ENCODE measurements at regions of chr6 and their contacts with region 1.

Region 1: DNA sequence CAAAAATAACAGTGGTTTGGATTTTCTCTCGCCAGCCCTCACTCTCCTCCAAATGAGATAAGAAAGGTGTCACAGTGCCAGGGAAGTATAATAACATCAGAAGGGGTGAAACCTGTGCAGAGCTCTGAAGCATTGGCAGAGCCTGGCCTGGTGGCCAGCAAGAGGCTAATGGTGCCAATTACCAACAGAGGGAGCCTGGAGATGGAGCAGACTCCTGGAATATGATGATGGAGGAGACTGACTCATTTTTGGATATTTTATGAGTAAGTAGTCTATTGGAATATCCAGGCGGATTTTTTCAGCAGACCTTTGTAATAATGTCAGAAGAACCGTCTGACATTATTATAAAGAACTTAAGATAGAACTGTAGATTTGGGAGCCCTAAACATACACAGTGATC is 442.6 kb upstream of the MARCKS start:
- DNase-seq: peak; percentile 56
- H3K4me3 Mint-ChIP-seq: no peak overlapping the region
- H3K27ac Mint-ChIP-seq: peak overlapping the region; percentile 1
- H3K4me1 Mint-ChIP-seq: peaks cover 34% of the 10 kb centered on the region
- H3K27me3 Mint-ChIP-seq: no peaks in the 10 kb centered on the region
- CTCF ChIP-seq: peak; percentile 49

Region 2: DNA sequence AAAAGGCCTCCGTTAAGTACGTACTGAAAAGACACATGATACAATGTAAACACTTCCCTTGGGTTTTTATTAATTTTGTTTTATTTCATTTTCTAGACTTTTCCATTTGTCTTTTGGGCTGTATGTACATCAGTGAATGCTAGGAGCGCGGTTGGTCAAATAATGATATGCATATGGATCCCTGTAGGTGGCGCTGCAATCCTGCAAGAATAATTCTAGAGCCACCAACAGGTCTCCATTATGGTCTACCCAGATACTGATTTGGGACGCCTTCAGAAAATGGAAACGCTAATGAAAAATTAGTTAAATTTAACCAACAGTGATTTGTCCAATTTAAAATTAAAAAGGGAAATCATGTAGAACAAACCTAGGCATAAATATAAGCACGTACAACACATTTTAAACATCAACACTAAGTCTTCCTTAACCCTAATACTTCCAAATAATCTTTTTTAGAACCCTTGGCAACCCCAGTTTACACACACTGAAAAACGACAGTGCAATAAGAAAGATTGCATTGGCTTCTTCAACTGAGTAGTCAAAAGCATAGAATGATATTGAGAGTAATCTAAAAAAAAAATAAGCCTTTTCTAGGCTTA is 633.9 kb before region 1 on chr6:
- CTCF ChIA-PET with region 1: no interaction called
- intact Hi-C with region 1: loop called (anchors 5 kb)
- DNase-seq: peak; percentile 76
- H3K4me3 Mint-ChIP-seq: no peak overlapping the region
- H3K27ac Mint-ChIP-seq: no peak overlapping the region
- H3K4me1 Mint-ChIP-seq: no peaks in the 10 kb centered on the region
- H3K27me3 Mint-ChIP-seq: no peaks in the 10 kb centered on the region
- CTCF ChIP-seq: peak; percentile 73

Region 3: DNA sequence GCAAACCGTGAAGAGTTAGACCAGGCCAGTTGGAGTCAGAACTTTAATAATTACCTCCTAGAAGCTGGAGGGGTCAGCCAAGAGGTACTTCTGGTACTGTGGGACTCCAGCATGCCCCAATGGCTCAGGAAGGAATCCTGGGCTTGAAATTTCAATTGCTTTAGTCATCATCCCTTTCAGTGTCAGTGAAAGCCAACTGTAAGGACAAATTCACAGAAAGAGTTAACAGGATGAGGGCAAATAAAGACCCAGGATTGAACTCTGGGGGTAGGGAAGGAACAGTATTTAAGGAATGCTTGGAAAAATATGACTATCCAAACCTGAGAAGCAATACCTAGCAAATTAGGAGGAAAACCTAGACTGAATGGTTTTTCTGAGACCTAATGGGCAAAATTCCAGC is 292.5 kb before region 1 on chr6:
- CTCF ChIA-PET with region 1: no interaction called
- intact Hi-C with region 1: loop called (anchors 2 kb)
- DNase-seq: peak; percentile 44
- H3K4me3 Mint-ChIP-seq: no peak overlapping the region
- H3K27ac Mint-ChIP-seq: peak overlapping the region; percentile 10
- H3K4me1 Mint-ChIP-seq: peaks cover 30% of the 10 kb centered on the region
- H3K27me3 Mint-ChIP-seq: no peaks in the 10 kb centered on the region
- CTCF ChIP-seq: no peak

Region 4: GRCh38 chr6:113359155-113360140 is 55.1 kb before region 1 on chr6:
- CTCF ChIA-PET with region 1: no interaction called
- intact Hi-C with region 1: loop called (anchors 5 kb)
- DNase-seq: peak; percentile 40
- H3K4me3 Mint-ChIP-seq: no peak overlapping the region
- H3K27ac Mint-ChIP-seq: peak overlapping the region; percentile 69
- H3K4me1 Mint-ChIP-seq: peaks cover 65% of the 10 kb centered on the region
- H3K27me3 Mint-ChIP-seq: no peaks in the 10 kb centered on the region
- CTCF ChIP-seq: no peak

Region 5: GRCh38 chr6:113632220-113632864 is 217.8 kb after region 1 on chr6:
- CTCF ChIA-PET with region 1: no interaction called
- intact Hi-C with region 1: loop called (anchors 5 kb)
- DNase-seq: peak; percentile 61
- H3K4me3 Mint-ChIP-seq: peak overlapping the region; percentile 55
- H3K27ac Mint-ChIP-seq: peak overlapping the region; percentile 97
- H3K4me1 Mint-ChIP-seq: peaks cover 57% of the 10 kb centered on the region
- H3K27me3 Mint-ChIP-seq: no peaks in the 10 kb centered on the region
- CTCF ChIP-seq: no peak

Region 6: DNA sequence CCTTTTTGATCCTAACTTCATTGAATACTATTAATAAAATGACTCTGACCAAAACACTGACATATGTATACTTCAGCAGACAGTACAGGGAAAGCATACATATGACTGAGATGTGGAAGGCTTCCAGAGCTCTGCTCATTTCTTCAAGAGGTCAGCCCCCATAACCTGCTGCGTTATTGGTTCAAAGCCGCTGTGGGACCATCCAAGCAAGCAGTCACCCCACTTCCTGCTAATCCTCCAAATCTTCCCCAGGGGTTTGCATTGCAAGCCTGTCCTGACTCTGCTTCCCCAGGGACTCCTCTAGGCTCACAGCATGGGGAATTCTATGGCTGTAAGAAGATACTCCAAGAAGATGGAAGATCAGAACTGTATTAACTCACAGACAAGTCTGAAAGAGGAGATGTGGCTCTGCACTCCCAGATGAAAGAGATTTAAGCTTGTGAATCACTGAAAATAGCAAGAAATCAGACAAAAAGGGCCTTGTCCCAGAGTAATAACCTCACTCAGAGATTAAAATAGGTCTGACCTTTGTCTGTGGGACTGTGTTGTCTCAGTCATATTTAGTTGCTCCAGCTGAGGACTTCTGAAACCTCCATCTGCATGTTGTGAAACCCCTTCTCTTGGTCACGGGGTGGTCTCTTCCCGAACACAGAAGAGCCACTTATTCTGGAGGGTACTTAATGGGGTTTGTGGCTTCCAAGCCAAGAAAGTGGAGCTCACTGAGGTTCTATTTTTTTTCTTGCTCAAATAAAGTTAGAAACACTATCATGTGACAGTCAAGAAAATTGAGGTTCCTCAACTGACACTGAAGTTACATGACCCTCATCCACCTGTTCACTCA is 341.2 kb after region 1 on chr6:
- CTCF ChIA-PET with region 1: no interaction called
- intact Hi-C with region 1: no loop called
- DNase-seq: no peak
- H3K4me3 Mint-ChIP-seq: no peak overlapping the region
- H3K27ac Mint-ChIP-seq: no peak overlapping the region
- H3K4me1 Mint-ChIP-seq: peaks cover 9% of the 10 kb centered on the region
- H3K27me3 Mint-ChIP-seq: no peaks in the 10 kb centered on the region
- CTCF ChIP-seq: no peak

Region 7: GRCh38 chr6:113879186-113880096 is 464.9 kb after region 1 on chr6:
- CTCF ChIA-PET with region 1: interaction called, 4 read pairs
- intact Hi-C with region 1: loop called (anchors 5 kb)
- DNase-seq: peak; percentile 54
- H3K4me3 Mint-ChIP-seq: no peak overlapping the region
- H3K27ac Mint-ChIP-seq: no peak overlapping the region
- H3K4me1 Mint-ChIP-seq: peaks cover 16% of the 10 kb centered on the region
- H3K27me3 Mint-ChIP-seq: no peaks in the 10 kb centered on the region
- CTCF ChIP-seq: peak; percentile 55

Measured in Calu3 (cell line).